ENCODE measurements at regions of chr4 and their contacts with region 1.

Region 1: DNA sequence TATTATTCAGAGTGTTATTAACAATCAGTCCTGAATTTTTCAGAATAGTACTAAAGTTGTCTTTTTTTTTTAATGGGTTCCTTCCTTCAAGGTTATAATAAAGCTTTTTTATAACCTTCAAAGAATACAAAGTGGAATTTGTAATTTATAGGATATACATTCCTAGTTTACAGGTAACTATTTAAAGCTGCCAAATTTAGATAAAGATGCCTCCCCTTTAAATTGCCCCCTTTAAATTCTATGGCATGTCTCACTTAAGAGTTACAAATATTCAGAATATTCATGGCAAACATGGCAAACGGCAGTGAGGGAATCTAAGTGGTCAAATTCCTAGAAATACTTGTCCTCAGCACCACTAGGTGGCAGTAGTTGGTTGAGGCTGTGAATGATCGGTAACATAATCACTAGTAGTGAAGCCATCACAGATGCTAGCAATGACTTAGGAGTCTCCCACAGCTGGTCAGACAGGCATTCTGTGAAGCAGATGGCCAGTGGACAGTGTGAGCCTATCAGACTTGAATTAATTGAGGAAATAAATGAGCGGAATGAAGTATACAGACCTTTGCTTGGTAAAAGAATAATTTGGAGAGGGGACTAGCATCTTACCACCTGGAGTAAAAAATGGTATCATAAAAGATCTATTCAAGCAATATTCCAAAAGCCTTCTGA is 86.4 kb downstream of the CBR4 start:
- DNase-seq: peak; percentile 59
- CTCF ChIP-seq: peak; percentile 76

Region 2: GRCh38 chr4:168900080-168900479 is 23.6 kb before region 1 on chr4:
- CTCF ChIA-PET with region 1: interaction called, 33 read pairs
- POLR2A ChIA-PET with region 1: no interaction called
- DNase-seq: no peak
- CTCF ChIP-seq: no peak

Region 3: DNA sequence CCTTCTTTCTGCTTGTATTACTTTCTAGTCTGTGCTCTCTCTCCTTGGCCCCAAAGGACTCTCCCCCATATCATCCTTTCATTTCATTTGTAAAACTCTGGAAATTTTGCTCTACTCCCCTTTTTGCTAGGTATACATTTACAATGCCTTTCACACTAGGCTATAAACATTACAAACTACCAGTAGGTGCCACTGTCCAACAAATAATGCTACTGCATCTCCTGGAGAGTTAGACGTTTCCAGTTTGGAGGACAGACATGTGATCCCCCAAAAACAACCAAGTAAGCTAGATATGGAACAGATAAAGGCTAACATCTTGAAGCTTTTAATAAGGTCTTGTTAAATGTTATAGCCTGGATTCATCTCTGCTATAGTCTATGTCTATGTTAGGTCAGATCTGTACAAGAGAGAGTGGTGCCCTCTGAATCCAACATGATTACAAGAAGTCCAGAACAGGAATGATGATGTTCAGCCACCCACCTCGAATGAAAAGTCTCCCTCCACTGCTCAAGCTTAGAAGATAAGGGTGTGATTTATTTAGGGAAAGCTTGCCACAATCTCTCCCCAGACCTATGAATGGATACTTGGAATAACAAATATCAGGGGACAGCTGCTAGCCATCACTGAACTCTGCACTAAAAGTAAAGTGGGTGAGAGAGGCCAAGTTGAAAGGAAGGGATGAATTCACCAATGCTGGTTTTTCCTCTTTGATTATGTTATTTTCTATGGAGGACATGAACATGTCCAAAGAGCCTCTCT is 72.1 kb after region 1 on chr4:
- CTCF ChIA-PET with region 1: interaction called, 15 read pairs
- POLR2A ChIA-PET with region 1: no interaction called
- DNase-seq: no peak
- CTCF ChIP-seq: no peak

Region 4: GRCh38 chr4:169115897-169116254 is 192.2 kb after region 1 on chr4:
- CTCF ChIA-PET with region 1: no interaction called
- POLR2A ChIA-PET with region 1: no interaction called
- DNase-seq: no peak
- CTCF ChIP-seq: no peak

Region 5: DNA sequence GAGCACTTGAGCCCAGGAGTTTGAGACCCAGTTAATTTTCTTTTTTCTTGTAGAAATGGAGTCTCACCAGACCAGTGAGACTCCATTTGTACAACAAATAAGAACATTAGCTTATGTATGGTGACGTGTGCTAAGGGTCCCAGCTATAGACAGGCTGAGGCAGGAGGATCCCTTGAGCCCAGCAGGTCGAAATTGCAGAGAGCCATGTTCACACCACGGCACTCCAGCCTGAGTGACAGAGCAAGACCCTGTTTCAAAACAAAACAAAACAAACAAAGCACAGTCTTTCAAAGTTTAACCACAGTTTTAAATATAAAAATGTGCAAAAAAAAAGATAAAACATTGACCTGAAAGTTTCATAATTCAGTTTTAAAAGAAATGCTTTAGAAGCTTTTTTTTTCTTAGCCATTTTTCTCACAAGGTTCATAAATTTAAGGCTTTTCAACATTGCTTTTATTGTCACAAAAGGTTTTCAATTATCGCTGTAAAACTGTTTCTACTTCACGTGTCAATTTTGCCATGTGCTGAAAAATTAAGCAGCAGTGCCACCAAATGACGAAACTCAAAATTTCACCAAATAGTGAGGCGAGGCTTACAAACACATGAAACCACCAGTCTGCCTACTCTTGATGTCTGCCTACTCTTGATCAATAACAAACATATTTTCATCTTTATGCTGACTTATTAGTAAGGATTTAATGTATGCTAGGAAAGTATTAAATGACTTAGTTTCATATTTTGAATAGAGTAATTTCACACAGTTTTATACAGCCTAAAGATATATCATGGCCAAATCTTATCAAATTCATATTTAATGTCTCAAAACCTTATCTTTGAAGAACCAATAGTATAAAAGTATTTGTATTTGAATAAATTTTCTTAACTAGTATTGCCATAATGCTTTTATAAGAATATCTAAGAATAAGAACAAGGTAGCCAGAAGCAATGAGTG is 562.4 kb after region 1 on chr4:
- CTCF ChIA-PET with region 1: interaction called, 28 read pairs
- POLR2A ChIA-PET with region 1: no interaction called
- DNase-seq: peak; percentile 48
- CTCF ChIP-seq: peak; percentile 67

Region 6: GRCh38 chr4:169566021-169566818 is 642.6 kb after region 1 on chr4:
- CTCF ChIA-PET with region 1: interaction called, 63 read pairs
- POLR2A ChIA-PET with region 1: no interaction called
- DNase-seq: peak; percentile 53
- CTCF ChIP-seq: peak; percentile 57

Measured in GM10248 (cell line).